RWPE1 (cell line): ENCODE measurements at regions of chr5 and their contacts with region 1.

Region 1: GRCh38 chr5:170225326-170226128 is 7.3 kb upstream of the C5orf58 start:
- DNase-seq: peak; percentile 75
- H3K27ac ChIP-seq: no peak overlapping the region
- CTCF ChIP-seq: peak; percentile 87

Region 2: DNA sequence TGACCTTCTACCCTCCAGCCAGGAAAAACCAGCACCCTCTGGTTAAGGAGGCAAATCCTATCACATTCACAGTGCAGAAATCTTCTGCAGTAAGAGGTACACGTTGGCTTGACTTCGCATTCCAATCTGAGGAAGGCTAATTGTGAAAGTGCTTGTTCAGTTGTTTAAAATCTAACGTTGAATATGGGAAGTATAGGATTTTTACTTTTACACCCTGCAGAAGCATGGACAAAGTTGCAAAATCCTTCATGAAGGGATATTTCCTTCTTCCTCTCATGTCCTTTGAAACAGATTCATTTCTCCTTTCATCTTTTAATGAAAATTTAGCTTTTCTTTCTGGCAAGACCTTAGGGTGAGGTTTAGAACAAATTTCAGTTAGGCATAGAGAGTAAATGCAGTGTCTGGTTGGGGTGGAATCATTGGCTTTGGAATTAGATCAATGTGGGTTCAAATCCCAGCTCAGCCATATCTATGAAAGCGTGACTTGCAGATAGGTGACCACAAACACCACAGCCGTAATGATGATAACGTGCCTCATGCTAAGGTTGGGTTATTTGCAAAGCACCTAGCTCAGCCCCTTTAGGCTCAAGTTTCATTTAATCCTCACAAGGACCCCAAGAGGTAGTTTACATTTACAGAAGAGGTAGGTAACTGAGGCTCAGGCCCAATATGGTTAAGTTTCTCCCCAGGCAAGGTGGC is 34.9 kb before region 1 on chr5:
- CTCF ChIA-PET with region 1: no interaction called
- POLR2A ChIA-PET with region 1: no interaction called
- DNase-seq: no peak
- H3K27ac ChIP-seq: no peak overlapping the region
- CTCF ChIP-seq: no peak

Region 3: DNA sequence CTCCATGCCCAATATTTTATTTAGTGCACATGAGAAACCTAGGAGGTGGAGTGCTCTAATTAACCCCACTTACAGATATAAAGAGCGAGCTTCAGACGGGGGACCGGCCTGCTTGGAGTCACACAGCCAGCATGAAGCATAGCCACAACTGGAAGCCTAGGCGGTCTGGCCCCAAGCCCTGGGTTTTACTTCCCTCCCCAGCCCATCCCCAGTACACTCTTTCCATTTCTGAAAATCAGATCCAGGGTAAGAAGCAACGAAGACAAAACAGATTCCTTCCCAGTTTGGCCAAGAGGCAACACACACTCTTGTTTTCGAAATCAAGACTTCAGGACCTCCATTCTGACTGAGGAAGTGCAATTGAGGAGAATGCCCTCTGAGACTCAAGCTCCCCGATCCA is 136.6 kb after region 1 on chr5:
- CTCF ChIA-PET with region 1: no interaction called
- POLR2A ChIA-PET with region 1: no interaction called
- DNase-seq: no peak
- H3K27ac ChIP-seq: no peak overlapping the region
- CTCF ChIP-seq: no peak

Region 4: DNA sequence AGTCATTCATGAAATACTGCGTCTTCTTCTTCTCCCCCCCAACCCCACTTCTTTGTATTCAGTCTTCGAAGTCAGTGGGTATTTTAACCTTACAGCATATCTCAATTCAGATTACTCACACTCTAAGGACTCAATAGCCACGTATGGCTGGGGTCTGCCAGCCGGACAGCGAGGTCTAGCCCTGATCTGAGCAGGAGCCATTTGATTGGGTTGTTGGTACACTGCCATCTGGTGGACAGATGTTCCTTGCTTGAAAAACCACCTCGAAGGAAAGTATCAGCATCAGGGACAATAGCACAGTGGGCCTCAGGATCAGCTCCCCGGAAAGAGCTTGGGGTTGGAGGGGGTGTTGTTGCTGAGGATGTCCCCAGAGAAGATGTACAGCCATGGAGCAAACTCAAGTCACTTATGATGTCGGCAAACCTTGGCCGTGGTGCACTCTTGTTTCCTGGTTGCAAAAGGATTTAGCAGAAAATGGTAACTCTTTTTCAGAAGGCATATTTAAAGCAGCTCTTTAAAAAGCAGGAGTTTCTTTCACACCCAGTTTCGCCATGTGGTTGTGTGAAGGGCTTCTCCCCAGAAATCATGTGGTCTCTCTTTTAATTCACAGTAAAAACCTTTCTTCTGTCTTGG is 195.4 kb after region 1 on chr5:
- CTCF ChIA-PET with region 1: interaction called, 44 read pairs
- POLR2A ChIA-PET with region 1: no interaction called
- DNase-seq: peak; percentile 83
- H3K27ac ChIP-seq: no peak overlapping the region
- CTCF ChIP-seq: peak; percentile 82